RWPE1 (cell line): ENCODE measurements at regions of chr7 and their contacts with region 1.

Region 1: DNA sequence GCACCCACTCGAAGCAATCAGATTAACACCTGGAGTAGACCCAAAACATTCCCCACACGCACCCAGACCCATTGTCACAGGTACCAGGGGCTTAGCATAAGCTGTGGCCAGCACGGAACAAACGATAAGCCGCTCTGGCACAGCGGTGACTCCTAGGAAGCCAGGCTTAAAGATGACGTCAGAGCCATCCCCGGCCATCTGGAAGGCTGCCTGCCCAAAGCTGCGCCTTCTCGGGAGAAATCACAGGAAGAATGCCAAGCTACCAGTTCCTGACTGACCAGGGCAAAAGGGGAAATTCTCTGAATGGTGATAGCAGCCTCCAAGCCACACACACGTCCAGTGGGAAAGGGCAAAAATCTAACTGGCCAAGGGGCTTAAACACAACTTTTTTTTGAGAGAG is 13.0 kb upstream of the WIPI2 start:
- DNase-seq: peak; percentile 24
- H3K27ac ChIP-seq: no peak overlapping the region
- CTCF ChIP-seq: no peak

Region 2: DNA sequence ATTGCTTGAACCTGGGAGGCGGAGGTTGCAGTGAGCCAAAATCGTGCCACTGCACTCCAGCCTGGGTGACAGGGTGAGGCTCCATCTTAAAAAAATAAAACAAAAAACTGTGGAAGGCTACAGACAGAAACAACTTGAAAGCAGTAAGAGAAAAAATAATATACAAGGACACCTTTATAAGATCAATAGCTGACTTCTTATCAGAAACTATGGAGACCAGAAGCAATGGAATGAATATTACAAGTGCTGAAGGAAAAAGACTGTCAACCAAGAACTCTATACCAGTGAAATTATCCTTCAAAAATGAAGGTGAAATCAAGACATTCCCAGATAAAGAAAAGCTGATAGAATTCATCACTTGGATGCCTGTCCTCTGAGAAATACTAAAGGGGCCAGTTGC is 82.4 kb before region 1 on chr7:
- CTCF ChIA-PET with region 1: no interaction called
- POLR2A ChIA-PET with region 1: interaction called, 10 read pairs
- DNase-seq: no peak
- H3K27ac ChIP-seq: no peak overlapping the region
- CTCF ChIP-seq: no peak